ENCODE measurements at regions of chr6 and their contacts with region 1.

Region 1: DNA sequence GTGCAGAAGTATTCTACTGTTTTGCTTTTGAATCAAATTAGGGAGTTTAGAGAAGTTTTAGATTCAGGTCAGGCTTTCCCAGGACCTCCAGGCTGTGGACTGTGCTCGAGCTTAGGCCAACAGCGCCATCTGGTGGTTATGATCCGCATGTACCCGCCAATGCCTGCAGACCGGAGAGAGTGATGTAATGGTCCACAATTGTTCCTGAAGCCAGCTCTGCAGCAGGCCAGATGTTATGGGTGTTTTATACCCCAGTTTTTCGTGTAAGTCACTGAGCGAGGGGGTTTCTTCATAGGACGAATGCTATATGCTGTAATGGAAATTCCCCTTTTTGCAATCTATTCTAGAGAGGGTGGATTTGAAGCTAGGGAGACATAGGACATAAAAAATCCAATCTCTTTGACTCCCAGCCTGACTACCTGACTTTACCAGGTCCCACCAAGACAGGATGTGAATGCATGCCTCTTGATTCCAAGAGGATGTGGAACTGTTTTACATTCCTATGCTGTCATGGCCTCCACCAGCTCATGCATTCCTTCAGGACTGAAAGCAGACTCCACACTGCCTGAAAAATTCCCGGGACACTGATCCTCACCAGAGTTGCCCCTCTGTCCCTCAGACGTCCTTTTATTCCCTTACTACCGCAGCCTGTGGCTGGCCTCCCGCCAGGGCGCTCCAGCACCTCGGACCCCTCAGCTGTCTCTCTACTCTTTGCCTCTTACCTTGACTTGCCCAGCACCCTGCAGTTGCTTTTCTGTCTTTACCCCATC is 41.2 kb upstream of the LY86 start:
- DNase-seq: peak; percentile 73
- H3K4me3 Mint-ChIP-seq: peak overlapping the region; percentile 44
- H3K27ac Mint-ChIP-seq: no peak overlapping the region
- H3K4me1 Mint-ChIP-seq: peaks cover 6% of the 10 kb centered on the region
- H3K27me3 Mint-ChIP-seq: peaks cover 68% of the 10 kb centered on the region

Region 2: GRCh38 chr6:6008648-6009421 is 538.5 kb before region 1 on chr6:
- intact Hi-C with region 1: loop called (anchors 5 kb)
- DNase-seq: peak; percentile 40
- H3K4me3 Mint-ChIP-seq: peak overlapping the region; percentile 81
- H3K27ac Mint-ChIP-seq: no peak overlapping the region
- H3K4me1 Mint-ChIP-seq: peaks cover 32% of the 10 kb centered on the region
- H3K27me3 Mint-ChIP-seq: peaks cover 72% of the 10 kb centered on the region

Region 3: GRCh38 chr6:6057424-6058053 is 489.8 kb before region 1 on chr6:
- intact Hi-C with region 1: loop called (anchors 1 kb)
- DNase-seq: no peak
- H3K4me3 Mint-ChIP-seq: no peak overlapping the region
- H3K27ac Mint-ChIP-seq: no peak overlapping the region
- H3K4me1 Mint-ChIP-seq: no peaks in the 10 kb centered on the region
- H3K27me3 Mint-ChIP-seq: peaks cover 12% of the 10 kb centered on the region

Region 4: DNA sequence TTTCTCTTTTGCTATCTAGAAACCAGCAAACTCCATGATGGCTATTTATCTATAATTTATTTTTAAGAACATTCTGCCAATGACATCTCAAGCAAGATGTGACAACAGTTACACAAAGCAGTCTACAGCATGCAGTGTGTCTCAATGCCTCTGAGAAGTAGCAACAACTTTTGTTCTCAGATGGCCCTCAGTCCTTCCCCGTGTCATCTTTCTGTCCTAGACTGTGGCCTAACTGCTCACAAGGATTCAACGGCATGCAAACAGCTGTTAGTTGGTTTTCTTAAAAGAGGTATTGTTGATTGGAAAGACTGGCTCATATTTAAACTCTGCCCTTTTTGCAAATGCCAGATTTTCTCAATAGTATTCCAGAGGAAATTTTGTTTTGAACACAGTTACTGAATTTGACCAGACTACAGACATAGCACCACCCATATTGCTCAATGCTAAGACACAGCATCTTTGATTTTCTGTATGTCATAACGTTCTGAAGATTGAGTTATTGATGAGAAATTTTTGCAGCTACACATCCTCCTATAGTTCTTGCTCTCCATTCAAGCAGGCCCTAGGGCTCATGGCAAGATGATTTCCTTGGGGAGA is 200.8 kb before region 1 on chr6:
- intact Hi-C with region 1: loop called (anchors 10 kb)
- DNase-seq: no peak
- H3K4me3 Mint-ChIP-seq: no peak overlapping the region
- H3K27ac Mint-ChIP-seq: no peak overlapping the region
- H3K4me1 Mint-ChIP-seq: no peaks in the 10 kb centered on the region
- H3K27me3 Mint-ChIP-seq: peaks cover 13% of the 10 kb centered on the region

Region 5: DNA sequence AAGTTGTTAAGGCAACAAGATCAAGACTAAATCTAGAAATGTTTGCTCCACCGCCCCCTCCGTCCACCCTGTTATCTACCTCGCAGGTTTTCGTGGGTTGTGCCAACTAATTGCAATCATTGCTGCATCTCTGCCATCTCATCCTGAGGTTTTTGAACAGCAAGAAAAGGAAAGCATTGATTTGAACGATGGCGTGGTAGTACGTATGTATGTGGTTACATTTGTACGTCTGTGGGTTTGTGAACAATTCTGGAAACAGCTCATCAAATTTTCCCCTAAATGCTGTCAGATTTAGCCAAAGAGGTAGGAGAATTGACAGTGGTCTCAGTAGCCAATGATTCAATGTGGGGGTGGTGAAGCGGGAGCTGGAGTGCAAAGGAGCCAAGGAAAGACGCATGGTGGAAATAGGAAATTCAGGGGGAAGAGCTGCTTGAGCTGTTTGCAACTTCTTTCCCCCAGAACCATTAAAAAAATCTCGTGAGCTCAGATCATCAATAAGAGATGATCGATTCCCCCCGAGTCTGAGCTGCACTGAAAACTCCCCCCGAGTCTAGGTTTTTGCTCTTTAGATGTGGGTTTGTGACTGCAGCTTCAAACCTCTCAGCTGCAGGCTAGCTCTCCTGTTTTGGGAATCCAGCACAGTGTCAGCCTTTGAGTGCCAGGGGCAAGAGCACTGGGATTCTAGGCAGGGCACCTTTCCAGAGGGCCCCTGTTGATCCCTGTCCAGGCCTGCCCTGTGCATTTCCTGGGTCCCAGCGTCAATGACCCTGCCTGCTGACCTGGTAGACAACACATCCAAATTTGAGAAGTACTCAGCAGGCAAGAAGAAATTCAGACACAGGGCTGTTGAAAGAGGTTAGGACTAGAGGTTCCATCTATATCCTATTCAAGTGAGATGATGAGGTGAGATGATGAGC is 31.3 kb before region 1 on chr6:
- intact Hi-C with region 1: loop called (anchors 2 kb)
- DNase-seq: peak; percentile 32
- H3K4me3 Mint-ChIP-seq: no peak overlapping the region
- H3K27ac Mint-ChIP-seq: no peak overlapping the region
- H3K4me1 Mint-ChIP-seq: peaks cover 16% of the 10 kb centered on the region
- H3K27me3 Mint-ChIP-seq: peaks cover 83% of the 10 kb centered on the region

Region 6: GRCh38 chr6:6622501-6622900 is 75.2 kb after region 1 on chr6:
- intact Hi-C with region 1: no loop called
- DNase-seq: no peak
- H3K4me3 Mint-ChIP-seq: no peak overlapping the region
- H3K27ac Mint-ChIP-seq: no peak overlapping the region
- H3K4me1 Mint-ChIP-seq: peaks cover 21% of the 10 kb centered on the region
- H3K27me3 Mint-ChIP-seq: peaks cover 1% of the 10 kb centered on the region